Activated T-helper 1 cell treated with anti-CD3 and anti-CD28 coated beads, Interleukin-12 subunit alpha, Interleukin-12 subunit beta, Interleukin-2, Interleukin-4 antibody, amounts not matched to agents 30 ng/mL and 10 ng/mL and 1 ng/mL, durations not matched to agents 14 hours and 24 hours and 36 hours (primary cell): ENCODE measurements at regions of chr7 and their contacts with region 1.

Region 1: GRCh38 chr7:20172736-20173334 is 44.3 kb downstream of the MACC1 start:
- DNase-seq: no peak
- H3K4me3 Mint-ChIP-seq: no peak overlapping the region
- H3K27ac Mint-ChIP-seq: no peak overlapping the region
- H3K4me1 Mint-ChIP-seq: no peaks in the 10 kb centered on the region
- H3K27me3 Mint-ChIP-seq: no peaks in the 10 kb centered on the region

Region 2: DNA sequence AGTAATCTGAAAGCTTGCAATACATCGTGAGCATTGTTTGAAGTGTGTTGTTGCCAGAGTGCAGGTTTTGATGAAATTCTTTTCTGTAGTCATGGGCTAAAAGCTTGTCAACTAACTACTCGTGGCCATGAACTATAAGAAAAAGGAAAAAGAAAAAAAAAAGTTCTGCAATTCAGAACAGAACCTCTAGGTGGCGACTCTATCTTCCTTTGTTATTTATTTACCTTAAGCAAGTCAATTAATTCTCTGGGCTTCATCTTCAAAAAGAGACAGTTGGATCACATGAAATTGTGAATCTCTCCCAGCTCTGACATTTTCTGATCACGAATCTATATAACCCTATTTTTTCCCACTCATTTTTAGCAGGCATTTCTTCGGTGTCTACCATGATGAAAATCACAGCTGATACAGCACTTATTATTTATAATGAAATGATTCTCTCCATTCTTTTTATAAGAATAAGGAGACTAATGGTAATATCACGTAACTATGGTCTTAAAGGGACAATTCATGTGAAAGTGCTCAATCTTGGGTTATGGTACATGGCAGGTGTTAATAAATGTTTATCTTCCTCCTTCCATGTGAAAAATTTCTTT is 418.2 kb before region 1 on chr7:
- intact Hi-C with region 1: loop called (anchors 10 kb)
- DNase-seq: no peak
- H3K4me3 Mint-ChIP-seq: no peak overlapping the region
- H3K27ac Mint-ChIP-seq: no peak overlapping the region
- H3K4me1 Mint-ChIP-seq: no peaks in the 10 kb centered on the region
- H3K27me3 Mint-ChIP-seq: no peaks in the 10 kb centered on the region

Region 3: GRCh38 chr7:19982841-19983835 is 189.7 kb before region 1 on chr7:
- intact Hi-C with region 1: loop called (anchors 10 kb)
- DNase-seq: no peak
- H3K4me3 Mint-ChIP-seq: no peak overlapping the region
- H3K27ac Mint-ChIP-seq: no peak overlapping the region
- H3K4me1 Mint-ChIP-seq: no peaks in the 10 kb centered on the region
- H3K27me3 Mint-ChIP-seq: no peaks in the 10 kb centered on the region

Region 4: GRCh38 chr7:21086688-21087087 is 913.9 kb after region 1 on chr7:
- intact Hi-C with region 1: no loop called
- DNase-seq: no peak
- H3K4me3 Mint-ChIP-seq: no peak overlapping the region
- H3K27ac Mint-ChIP-seq: no peak overlapping the region
- H3K4me1 Mint-ChIP-seq: no peaks in the 10 kb centered on the region
- H3K27me3 Mint-ChIP-seq: peaks cover 4% of the 10 kb centered on the region